ENCODE measurements at regions of chr1 and their contacts with region 1.

Region 1: DNA sequence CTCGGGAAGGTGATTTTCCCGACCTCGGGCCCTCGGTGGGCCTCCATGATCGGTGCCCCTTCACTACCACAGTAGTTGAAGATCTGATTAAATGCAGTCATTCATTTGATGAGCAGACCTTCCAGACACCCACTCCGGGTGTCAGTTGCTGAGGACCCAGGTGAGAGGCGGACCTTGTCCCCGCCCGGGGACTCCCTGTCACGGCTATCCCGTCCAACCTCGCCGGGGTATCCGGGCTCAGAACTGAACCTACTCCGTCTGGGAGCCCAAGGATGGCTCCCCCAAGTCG is 22.6 kb downstream of the RNU1-3 start:
- DNase-seq: peak; percentile 20
- H3K4me3 ChIP-seq: peak overlapping the region; percentile 73 to 83 (median 74)
- H3K27ac ChIP-seq: peak overlapping the region; percentile 53
- H3K4me1 ChIP-seq: peaks cover 15% of the 10 kb centered on the region
- H3K27me3 ChIP-seq: no peaks in the 10 kb centered on the region
- CTCF ChIP-seq: no peak

Region 2: DNA sequence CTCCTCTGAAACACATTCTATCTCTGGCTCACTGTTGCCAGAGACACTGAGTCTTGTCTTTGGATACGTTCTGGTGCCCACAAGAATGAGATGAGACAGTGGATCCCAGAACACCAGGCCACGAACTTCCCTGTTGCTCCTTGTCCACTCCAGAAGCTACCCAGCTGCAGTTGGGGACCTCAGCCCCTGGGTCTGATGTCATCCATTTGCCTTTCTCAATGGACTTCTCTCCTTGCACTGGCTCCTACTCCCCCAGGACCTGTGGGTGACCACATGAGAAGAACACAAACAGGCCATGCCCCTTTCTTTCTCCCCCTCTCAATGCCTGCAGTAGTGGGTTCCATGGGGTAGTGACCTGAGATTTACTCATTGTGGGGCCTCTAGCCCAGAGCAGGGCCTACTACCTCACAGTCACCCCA is 36.7 kb before region 1 on chr1:
- CTCF ChIA-PET with region 1: no interaction called
- dilution Hi-C with region 1: no loop called
- in situ Hi-C with region 1: no loop called
- intact Hi-C with region 1: no loop called
- DNase-seq: no peak
- H3K4me3 ChIP-seq: no peak overlapping the region
- H3K27ac ChIP-seq: no peak overlapping the region
- H3K4me1 ChIP-seq: peaks cover 7% of the 10 kb centered on the region
- H3K27me3 ChIP-seq: no peaks in the 10 kb centered on the region
- CTCF ChIP-seq: no peak

Region 3: DNA sequence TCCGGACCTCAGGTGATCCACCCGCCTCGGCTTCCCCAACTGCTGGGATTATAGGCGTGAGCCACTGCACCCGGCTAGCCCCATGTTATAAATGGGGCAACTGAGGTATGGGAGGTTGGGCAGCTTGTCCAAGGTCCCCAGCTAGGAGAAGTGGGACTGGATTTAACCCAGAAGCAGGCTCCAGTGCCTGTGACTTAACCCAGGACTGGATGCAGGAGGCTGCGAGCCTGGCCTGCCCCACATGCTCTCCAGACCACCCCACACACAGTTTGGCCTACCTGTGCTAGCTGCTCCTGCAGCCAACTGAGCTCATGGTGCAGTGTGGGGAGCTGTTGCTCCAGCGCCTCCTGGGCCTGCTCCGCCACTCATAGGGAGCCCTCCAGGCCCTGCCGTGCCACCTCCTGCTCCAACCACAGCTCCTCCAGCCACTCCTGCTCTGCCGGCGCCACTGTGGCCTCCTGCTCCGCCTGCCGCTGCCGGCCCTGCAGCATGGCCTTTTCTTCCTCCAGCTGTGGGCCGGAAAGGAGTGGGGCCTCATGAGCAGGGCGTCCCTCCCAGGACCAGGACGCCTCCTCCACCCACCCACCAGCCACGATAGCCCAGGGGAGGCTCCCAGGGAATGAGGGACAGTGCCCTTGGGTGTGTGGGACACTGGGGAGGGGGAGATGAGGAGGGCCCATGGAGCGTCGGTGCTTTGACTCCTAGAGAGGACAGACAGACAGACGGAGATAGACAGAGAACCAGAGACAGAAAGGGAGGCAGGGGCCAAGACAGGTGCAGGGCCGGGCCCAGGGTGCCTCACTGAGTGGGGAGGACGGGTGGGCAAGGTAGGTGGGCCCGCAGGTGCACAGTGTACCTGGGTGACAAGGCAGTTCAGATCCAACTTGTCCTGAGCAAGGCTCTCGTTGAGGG is 18.4 kb before region 1 on chr1:
- CTCF ChIA-PET with region 1: no interaction called
- dilution Hi-C with region 1: no loop called
- in situ Hi-C with region 1: no loop called
- intact Hi-C with region 1: loop called (anchors 1 kb)
- DNase-seq: no peak
- H3K4me3 ChIP-seq: no peak overlapping the region
- H3K27ac ChIP-seq: no peak overlapping the region
- H3K4me1 ChIP-seq: peaks cover 25% of the 10 kb centered on the region
- H3K27me3 ChIP-seq: no peaks in the 10 kb centered on the region
- CTCF ChIP-seq: no peak

Region 4: GRCh38 chr1:16717336-16718098 is 73.4 kb after region 1 on chr1:
- CTCF ChIA-PET with region 1: no interaction called
- dilution Hi-C with region 1: no loop called
- in situ Hi-C with region 1: no loop called
- intact Hi-C with region 1: no loop called
- DNase-seq: peak; percentile 1
- H3K4me3 ChIP-seq: no peak overlapping the region
- H3K27ac ChIP-seq: no peak overlapping the region
- H3K4me1 ChIP-seq: no peaks in the 10 kb centered on the region
- H3K27me3 ChIP-seq: peaks cover 12% of the 10 kb centered on the region
- CTCF ChIP-seq: no peak

Region 5: DNA sequence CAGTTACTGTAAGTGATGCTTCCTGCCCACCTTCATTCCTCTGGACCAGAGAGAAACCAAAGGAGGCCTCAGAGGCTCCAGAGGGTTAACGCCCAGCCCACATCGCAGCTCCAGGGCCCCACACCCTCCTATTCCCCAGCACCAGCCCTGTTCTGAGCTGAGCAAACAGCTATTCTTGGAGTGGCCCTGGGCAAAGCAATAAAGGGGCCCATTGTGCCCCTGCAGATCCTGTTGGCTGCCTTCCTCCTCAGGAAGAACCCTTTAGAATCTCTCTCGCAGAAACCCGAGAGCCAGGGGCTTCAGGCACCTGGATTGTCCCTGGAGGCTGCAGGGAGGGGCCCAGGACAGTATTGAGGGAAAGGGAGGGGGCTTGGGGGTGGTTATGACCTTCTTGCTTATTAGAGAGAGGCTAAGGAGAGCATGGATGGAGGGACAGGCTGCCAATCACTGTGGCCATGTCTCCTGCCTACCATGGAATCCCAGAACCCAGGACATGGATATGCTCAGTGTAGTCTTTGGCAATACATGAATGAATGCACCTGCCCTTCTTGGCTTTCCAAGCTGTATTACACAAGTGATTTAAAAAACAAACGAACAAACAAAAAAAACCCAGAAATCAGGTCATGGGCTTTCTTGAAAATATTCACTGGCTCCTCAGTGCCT is 465.9 kb after region 1 on chr1:
- CTCF ChIA-PET with region 1: no interaction called
- dilution Hi-C with region 1: no loop called
- in situ Hi-C with region 1: no loop called
- intact Hi-C with region 1: no loop called
- DNase-seq: no peak
- H3K4me3 ChIP-seq: no peak overlapping the region
- H3K27ac ChIP-seq: no peak overlapping the region
- H3K4me1 ChIP-seq: peaks cover 13% of the 10 kb centered on the region
- H3K27me3 ChIP-seq: no peaks in the 10 kb centered on the region
- CTCF ChIP-seq: no peak

Region 6: DNA sequence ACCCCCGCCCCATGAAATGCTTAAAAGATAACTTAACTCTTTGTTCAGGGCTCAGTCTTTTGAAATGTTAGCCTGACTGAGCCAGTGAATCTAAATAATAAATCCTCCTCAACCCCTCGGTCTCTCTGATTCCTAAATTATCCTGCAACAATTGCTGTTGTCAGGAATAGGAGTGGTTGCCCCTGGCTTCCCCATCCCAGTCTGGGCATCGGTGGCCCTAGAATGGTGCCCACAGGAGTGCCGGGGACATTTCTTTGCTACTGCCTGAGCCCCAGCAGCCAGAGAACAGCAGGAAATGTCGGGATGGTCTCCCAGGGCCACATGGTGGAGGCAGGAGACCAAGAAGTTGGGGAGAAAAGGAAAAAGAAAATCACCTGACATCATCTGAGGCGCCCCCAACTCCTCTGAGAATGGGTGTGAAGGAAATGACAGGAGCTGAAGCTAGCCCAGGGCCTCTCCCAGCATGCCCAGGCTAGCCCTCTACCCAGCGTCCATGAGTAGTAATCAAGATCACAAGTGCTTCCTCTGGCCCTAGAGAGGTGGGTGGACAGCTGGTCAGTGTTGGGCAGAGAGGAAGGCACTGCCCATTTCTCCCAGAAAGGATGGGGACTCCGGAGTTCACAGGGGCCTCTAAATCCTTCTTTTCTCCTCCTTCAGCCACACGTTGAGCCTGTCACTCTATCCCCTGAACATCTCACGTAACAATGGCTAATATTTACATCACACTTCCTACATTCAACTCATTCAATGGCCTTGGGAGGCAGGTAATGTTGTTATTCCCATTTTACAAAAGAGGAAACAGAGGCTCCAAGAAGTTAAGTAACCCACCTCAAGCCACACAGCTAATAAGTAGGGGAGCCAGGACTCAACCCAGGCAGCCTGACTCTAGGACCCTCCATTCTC is 665.5 kb after region 1 on chr1:
- CTCF ChIA-PET with region 1: interaction called, 14 read pairs
- dilution Hi-C with region 1: no loop called
- in situ Hi-C with region 1: no loop called
- intact Hi-C with region 1: no loop called
- DNase-seq: no peak
- H3K4me3 ChIP-seq: no peak overlapping the region
- H3K27ac ChIP-seq: no peak overlapping the region
- H3K4me1 ChIP-seq: peaks cover 16% of the 10 kb centered on the region
- H3K27me3 ChIP-seq: no peaks in the 10 kb centered on the region
- CTCF ChIP-seq: no peak